ENCODE measurements at regions of chrX and their contacts with region 1.

Region 1: GRCh38 chrX:38596939-38597338 is 35.6 kb downstream of the TSPAN7 start:
- DNase-seq: no peak
- ATAC-seq: no peak
- H3K4me3 ChIP-seq: no peak overlapping the region
- H3K27ac ChIP-seq: no peak overlapping the region
- H3K4me1 ChIP-seq: no peaks in the 10 kb centered on the region
- H3K27me3 ChIP-seq: peaks cover 4% of the 10 kb centered on the region; the same call in 1 of the 2 replicates
- CTCF ChIP-seq: no peak

Region 2: DNA sequence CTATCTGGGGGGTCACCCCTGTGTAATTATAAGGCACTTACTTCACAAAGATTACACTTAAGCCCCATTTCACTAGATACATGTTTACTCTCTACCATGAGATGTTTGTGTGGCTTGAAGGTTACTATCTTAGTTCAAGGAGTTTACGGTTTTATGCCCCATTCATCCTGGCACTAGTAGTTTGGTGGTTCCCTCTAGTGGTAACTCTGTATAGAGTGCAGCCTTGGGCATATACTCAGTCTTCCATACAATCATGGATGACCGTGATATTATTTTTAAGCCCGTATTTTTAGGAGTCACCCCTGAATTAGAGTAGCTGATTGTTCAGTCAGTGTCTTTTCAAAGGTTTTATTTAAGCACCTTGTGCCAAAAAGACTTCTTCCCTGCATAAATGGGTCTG is 1698.6 kb before region 1 on chrX:
- CTCF ChIA-PET with region 1: no interaction called
- POLR2A ChIA-PET with region 1: interaction called, 11 read pairs
- intact Hi-C with region 1: no loop called
- DNase-seq: peak; percentile 30
- ATAC-seq: no peak
- H3K4me3 ChIP-seq: no peak overlapping the region
- H3K27ac ChIP-seq: no peak overlapping the region
- H3K4me1 ChIP-seq: no peaks in the 10 kb centered on the region
- H3K27me3 ChIP-seq: no peaks in the 10 kb centered on the region
- CTCF ChIP-seq: peak; percentile 67

Region 3: GRCh38 chrX:38552721-38553120 is 44.2 kb before region 1 on chrX:
- CTCF ChIA-PET with region 1: no interaction called
- POLR2A ChIA-PET with region 1: no interaction called
- intact Hi-C with region 1: no loop called
- DNase-seq: no peak
- ATAC-seq: no peak
- H3K4me3 ChIP-seq: no peak overlapping the region
- H3K27ac ChIP-seq: no peak overlapping the region
- H3K4me1 ChIP-seq: no peaks in the 10 kb centered on the region
- H3K27me3 ChIP-seq: 0 out of 2 replicates have a peak, but pooled peaks cover 5% of the 10 kb centered on the region
- CTCF ChIP-seq: no peak

Measured in PC-3 (cell line).